ENCODE measurements at regions of chr13 and their contacts with region 1.

Region 1: DNA sequence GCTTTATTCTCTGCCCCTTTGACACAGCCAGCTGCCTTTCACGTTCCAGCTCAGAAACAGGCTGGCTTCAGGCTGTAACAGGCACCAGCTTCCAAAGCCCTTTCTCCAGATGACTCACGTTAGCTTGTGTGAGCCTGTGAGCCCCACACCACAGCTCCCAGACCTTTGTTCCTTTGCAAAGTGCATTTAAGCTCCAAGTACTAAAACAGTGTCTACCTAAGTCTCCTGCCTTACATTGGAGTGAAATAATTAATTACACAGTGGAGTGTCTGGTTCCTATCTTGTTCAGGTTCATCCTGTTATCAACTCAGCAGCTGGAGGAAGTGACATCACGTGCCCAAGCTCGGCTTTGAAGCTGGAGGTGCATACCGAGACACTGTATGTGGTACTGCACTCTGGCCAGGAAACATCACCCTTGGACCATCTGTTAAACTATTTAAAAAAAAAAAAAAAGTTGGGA is 475.8 kb downstream of the FOXO1 start:
- DNase-seq: peak; percentile 58
- H3K4me3 Mint-ChIP-seq: peak overlapping the region; percentile 35
- H3K27ac Mint-ChIP-seq: peak overlapping the region; percentile 87
- H3K4me1 Mint-ChIP-seq: peaks cover 66% of the 10 kb centered on the region
- H3K27me3 Mint-ChIP-seq: no peaks in the 10 kb centered on the region

Region 2: DNA sequence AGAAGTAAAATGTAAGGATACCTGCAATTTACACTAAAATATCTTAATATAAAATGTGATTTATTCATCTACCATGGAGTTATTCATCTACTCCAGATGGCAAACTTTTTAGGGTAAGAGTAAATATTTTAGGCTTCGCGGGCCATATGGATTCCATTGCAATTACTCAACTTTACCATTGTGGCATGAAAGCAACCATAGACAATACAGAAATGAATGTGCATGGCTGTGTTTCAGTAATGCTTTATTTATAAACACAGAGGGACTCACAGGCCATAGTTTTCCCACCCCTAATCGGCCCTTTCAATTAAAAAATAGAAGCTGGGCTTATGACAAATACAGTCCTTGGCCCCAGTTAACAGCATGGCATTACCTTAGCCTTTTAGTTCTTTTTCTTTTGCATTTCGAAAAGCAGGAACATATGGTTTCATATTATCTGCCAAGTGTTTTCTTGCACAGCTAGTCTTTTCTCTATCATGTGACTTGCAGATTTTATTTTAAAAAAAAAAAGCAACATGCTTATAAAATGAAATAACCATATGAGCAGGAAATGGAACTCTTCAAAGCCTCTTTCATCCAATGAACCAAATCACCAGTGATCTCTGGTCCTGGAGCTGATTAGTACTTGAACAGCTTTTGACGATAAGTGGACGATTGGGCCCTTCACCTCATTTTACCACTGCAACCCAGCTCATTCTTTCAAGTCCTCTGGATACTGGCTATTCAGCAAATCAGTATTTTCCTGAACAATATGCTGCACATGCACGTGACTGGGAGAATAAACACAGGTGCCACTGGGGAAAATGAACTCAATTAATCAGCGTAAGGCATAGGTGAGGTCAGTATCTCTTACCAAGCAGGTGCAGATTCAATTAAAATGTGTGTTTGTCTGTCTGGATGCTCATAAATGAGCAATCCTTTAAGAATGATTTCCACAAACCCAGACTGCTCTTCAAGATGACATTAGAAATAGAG is 651.6 kb before region 1 on chr13:
- intact Hi-C with region 1: no loop called
- DNase-seq: no peak
- H3K4me3 Mint-ChIP-seq: no peak overlapping the region
- H3K27ac Mint-ChIP-seq: no peak overlapping the region
- H3K4me1 Mint-ChIP-seq: no peaks in the 10 kb centered on the region
- H3K27me3 Mint-ChIP-seq: no peaks in the 10 kb centered on the region

Region 3: DNA sequence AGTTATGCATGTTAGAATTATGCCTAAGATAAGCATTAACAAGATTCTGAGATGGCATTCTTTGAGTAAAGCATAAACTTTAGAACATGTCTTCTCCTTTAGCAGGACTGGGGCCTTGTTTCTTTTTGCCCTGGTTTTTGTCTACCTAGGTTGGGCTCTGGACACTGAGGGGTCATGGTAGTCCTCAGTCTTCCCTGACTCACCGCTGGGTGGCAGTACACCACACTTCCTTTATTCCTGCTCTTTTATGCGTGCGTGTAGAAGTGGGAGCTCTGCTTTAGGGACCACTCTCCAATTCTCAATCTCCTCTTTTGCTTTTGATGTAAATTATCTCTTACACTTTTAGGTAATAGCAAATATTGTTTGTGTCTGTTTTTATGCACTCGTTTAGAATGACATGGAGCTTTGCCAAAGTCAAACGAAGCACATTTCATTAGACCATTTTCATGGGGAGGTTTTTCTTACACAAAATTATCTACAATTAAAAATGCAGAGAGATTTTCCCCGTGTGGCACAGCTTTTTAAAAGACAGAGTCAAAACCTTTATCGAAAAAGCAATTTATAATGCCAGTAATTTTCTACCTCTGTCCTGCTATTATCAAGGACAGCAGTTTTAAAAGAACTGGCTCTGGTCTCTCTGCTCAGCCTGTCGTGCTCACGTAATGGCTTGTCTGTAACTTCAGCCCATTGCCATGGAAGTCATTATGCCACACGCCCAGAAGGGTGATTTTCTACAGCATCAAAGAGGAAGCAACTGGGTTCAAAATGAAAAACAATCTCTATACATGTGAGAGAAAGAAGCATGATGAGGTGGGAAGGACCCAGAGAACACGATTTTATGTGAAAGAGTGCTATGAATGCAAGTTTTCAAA is 121.3 kb before region 1 on chr13:
- intact Hi-C with region 1: loop called (anchors 2 kb)
- DNase-seq: peak; percentile 45
- H3K4me3 Mint-ChIP-seq: no peak overlapping the region
- H3K27ac Mint-ChIP-seq: no peak overlapping the region
- H3K4me1 Mint-ChIP-seq: peaks cover 37% of the 10 kb centered on the region
- H3K27me3 Mint-ChIP-seq: no peaks in the 10 kb centered on the region

Region 4: DNA sequence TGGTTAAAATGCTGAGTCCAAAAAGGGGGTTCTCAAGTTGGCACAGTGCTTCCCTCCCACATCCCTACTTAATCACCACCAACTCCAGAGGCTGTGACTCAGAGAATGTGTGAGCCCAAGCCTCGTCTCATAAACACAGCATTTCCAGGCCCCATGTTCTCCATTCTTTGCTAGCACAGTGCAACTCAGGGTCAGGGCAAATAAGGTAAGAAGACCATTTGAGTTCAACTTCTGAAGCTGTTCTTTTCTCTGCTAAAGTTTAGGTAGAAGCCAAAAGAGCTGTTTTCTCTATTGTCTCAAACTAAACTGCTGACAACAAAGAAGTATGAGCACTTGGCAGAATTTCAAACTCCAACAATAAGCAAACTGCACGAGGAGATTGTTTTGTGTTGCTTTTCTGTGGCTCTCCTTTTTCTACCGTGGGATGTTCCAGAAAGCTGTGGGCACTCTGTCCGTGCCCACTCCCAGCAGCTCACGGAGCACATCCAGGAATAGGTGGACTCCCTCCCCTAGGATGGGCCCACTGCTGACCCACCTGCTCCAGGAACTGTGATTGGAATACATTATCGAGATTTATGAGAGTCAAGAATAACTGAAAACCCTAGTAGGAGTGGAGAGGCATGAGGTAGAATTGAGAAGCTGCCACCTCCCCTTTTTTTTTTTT is 40.9 kb before region 1 on chr13:
- intact Hi-C with region 1: loop called (anchors 1 kb)
- DNase-seq: no peak
- H3K4me3 Mint-ChIP-seq: no peak overlapping the region
- H3K27ac Mint-ChIP-seq: no peak overlapping the region
- H3K4me1 Mint-ChIP-seq: peaks cover 67% of the 10 kb centered on the region
- H3K27me3 Mint-ChIP-seq: no peaks in the 10 kb centered on the region

Region 5: DNA sequence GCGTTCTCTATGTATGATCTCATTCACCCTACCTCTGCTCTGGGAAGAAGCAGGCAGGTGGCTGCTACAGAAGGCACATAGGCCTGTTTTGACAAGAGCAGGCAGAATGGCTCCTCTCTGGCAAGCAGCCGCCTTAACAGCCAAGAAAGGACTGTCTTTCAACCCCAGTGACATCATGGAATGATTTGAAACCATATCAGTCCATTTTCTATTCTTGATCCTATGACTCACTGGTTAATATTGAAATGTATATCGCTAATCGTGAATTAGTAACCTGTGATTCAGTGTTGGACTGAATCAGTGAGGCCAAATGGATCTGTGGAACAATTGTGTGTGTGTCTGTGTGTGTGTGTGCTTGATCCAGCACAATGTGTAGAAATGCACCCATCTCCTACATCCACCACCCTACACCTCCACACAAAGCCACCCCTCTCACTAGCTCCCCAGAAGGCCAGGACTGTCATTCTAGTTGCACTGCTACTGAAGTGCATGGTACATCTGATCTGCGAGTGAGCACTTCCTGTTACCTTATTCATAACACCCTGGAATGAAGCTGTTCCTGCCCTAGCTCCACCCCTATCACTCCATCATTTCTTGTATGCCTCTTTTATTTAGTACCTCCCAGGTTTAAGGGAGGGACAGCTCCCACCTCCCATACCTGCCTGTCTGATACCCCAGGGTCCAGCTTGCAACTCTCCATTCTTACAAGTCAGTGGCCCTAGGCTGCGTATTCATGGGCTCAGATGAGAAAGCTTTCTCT is 15.8 kb after region 1 on chr13:
- intact Hi-C with region 1: loop called (anchors 2 kb)
- DNase-seq: peak; percentile 32
- H3K4me3 Mint-ChIP-seq: peak overlapping the region; percentile 36
- H3K27ac Mint-ChIP-seq: peak overlapping the region; percentile 95
- H3K4me1 Mint-ChIP-seq: peaks cover 57% of the 10 kb centered on the region
- H3K27me3 Mint-ChIP-seq: no peaks in the 10 kb centered on the region

Region 6: DNA sequence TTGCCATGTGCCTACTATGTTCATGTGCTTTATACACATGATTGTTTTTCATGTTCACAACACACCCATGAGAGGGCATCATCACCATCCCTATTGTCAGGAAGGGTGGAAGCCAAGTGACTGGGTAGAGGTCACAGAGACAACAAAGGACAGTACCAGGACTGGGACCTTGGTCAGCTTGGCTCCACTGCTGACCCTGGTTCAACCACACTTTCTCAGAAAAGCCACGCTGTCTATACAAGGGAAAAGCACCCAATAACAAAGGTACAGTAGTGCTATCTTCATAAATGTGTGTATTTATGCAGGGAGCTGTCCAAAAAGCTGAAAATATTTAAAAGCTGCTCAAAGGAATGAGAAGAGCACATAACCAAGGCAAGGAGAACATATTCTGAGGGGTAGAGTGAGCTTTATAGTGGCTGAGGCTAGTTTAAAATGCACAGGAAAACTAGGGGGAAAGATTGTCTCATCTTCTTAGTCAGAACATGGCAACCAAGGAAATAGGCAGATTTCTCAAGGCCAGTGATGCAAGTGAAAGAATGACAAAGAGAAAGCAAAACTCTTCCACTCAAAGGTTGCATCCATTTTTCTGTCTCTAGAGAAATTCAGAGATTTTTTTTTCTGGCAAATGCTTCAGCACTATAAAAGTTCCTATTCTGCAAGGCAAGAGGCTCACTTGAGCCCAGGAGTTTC is 60.8 kb after region 1 on chr13:
- intact Hi-C with region 1: loop called (anchors 2 kb)
- DNase-seq: peak; percentile 4
- H3K4me3 Mint-ChIP-seq: no peak overlapping the region
- H3K27ac Mint-ChIP-seq: peak overlapping the region; percentile 78
- H3K4me1 Mint-ChIP-seq: peaks cover 39% of the 10 kb centered on the region
- H3K27me3 Mint-ChIP-seq: no peaks in the 10 kb centered on the region

Region 7: DNA sequence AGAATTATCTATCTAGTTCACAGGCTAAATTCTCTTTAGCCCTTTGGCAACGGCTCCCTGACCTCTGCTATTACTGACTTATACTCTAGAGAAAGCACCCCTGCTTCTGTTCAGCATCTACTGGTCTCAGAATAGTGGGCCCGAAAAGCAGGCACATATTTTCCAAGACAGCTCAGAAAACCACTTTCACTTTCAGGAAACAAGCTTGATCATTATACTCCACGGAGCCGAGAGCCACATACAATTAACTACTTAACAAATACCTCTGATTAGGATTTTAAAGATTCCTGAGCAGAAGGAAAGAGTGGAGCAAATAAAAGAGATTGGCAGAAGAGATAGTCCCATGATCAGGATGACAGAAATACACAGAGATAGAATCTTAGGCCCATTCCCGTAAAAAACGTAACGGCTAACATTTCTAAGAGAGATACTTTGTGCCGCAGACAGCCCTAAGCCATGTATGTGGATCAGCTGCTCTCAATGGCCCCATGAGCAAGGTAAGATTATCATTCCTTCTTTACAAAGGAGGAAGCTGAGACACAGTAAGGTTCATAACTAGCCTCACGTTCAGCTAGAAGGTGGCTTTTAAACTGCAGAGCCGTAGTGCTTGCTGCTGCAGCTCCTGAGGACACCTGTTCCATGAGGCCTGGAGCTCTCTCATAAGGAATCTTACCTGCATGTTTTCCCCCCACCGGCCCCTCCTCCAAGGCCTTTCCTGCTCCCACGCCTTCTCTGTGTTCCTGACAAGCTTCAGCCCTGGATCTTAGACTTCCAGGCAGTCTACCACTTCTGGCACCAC is 248.5 kb after region 1 on chr13:
- intact Hi-C with region 1: loop called (anchors 5 kb)
- DNase-seq: no peak
- H3K4me3 Mint-ChIP-seq: peak overlapping the region; percentile 23
- H3K27ac Mint-ChIP-seq: peak overlapping the region; percentile 73
- H3K4me1 Mint-ChIP-seq: peaks cover 33% of the 10 kb centered on the region
- H3K27me3 Mint-ChIP-seq: peaks cover 2% of the 10 kb centered on the region

Measured in activated T-helper 1 cell treated with anti-CD3 and anti-CD28 coated beads, Interleukin-12 subunit alpha, Interleukin-12 subunit beta, Interleukin-2, Interleukin-4 antibody, amounts not matched to agents 30 ng/mL and 10 ng/mL and 1 ng/mL, durations not matched to agents 14 hours and 24 hours and 36 hours (primary cell).